Breast epithelium (tissue), 4 donors: ENCODE measurements at regions of chr6 and their contacts with region 1.

Region 1: GRCh38 chr6:14616656-14617055 is 499.1 kb downstream of the CD83 start:
- DNase-seq: no peak
- H3K4me3 ChIP-seq: no peak overlapping the region
- H3K27ac ChIP-seq: no peak overlapping the region
- H3K4me1 ChIP-seq: no peaks in the 10 kb centered on the region
- H3K27me3 ChIP-seq: no peaks in the 10 kb centered on the region
- CTCF ChIP-seq: no peak
- POLR2A ChIP-seq: no peak

Region 2: DNA sequence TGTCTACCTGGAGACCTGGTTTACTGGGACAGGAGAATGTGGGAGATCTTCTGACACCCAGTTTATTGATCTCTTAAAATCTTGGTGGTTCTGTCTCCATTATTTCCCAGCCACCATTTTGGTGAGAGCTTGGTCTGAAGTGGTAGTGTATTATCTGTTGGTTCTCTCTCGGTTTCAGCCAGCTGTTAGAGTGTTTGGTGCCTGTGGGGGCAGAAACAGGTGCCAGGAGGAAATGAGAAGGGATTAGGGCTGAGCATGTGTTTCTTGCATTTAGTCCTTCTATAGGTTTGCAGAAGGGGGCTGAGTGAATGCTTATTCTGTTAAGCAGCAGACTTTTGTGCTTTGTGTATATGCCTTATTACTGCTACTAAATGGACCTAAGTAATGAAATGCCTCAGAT is 638.8 kb after region 1 on chr6:
- intact Hi-C with region 1: loop called (anchors 5 kb)
- DNase-seq: no peak
- H3K4me3 ChIP-seq: no peak overlapping the region
- H3K27ac ChIP-seq: no peak overlapping the region
- H3K4me1 ChIP-seq: peaks cover 0 to 3% of the 10 kb centered on the region in 2 donors
- H3K27me3 ChIP-seq: no peaks in the 10 kb centered on the region
- CTCF ChIP-seq: no peak
- POLR2A ChIP-seq: no peak